Heart right ventricle (tissue), 16 donors: ENCODE measurements at regions of chr11 and their contacts with region 1.

Region 1: DNA sequence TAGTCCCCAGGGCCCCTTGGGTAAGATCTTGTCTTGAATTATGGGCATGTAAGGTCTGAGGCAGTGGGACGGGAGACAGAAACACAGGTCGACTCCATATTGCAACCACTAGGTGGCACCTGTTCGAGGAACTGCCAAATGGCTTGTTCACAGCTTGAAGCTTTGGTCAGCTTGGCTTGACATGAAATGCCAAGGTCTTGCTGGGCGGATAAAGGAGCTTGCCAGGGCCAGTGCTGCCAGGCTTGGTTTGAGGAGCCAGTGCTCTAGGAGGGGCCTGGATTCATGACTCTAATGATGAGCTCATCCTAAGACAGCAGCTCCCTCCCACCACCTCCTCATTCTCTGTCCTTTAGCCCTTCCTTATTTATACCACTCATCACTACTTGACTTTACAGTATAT is 11.9 kb upstream of the NRIP3 start:
- DNase-seq: peak in 1 of 2 donors; percentile 66
- ATAC-seq: peak; percentile 64 to 84 (median 75)
- H3K4me3 ChIP-seq: no peak overlapping the region
- H3K27ac ChIP-seq: no peak overlapping the region
- H3K4me1 ChIP-seq: peaks cover 0 to 32% (median 21%) of the 10 kb centered on the region in 9 donors
- H3K27me3 ChIP-seq: no peaks in the 10 kb centered on the region
- CTCF ChIP-seq: peak; percentile 45 to 83 (median 79)

Region 2: DNA sequence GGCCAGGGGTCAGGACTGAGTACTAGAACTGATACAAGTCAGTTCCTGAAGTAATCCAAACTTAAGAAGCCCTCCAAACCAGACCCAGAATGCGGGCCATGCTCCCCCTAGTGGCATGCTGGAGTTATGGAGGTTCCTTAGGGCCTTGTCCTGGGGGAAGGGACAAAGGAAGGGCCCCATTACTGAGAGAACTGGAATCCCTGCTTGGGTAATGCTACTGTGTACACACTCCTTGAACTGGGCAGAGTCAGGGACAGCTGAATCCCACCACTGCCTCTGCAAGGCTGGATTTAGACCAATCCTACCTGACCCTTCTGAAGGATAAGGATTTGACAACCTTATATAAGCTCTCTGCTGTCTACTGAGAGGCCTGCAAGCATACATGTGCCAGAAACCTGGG is 202.0 kb before region 1 on chr11:
- intact Hi-C with region 1: no loop called
- DNase-seq: peak; percentile 75 to 81
- ATAC-seq: peak; percentile 35 to 61 (median 48)
- H3K4me3 ChIP-seq: no peak overlapping the region
- H3K27ac ChIP-seq: peak overlapping the region in 8 of 10 donors; percentile 31 to 63 (median 43)
- H3K4me1 ChIP-seq: peaks cover 6 to 65% (median 31%) of the 10 kb centered on the region in 9 donors
- H3K27me3 ChIP-seq: no peaks in the 10 kb centered on the region
- CTCF ChIP-seq: peak; percentile 63 to 94 (median 88)

Region 3: DNA sequence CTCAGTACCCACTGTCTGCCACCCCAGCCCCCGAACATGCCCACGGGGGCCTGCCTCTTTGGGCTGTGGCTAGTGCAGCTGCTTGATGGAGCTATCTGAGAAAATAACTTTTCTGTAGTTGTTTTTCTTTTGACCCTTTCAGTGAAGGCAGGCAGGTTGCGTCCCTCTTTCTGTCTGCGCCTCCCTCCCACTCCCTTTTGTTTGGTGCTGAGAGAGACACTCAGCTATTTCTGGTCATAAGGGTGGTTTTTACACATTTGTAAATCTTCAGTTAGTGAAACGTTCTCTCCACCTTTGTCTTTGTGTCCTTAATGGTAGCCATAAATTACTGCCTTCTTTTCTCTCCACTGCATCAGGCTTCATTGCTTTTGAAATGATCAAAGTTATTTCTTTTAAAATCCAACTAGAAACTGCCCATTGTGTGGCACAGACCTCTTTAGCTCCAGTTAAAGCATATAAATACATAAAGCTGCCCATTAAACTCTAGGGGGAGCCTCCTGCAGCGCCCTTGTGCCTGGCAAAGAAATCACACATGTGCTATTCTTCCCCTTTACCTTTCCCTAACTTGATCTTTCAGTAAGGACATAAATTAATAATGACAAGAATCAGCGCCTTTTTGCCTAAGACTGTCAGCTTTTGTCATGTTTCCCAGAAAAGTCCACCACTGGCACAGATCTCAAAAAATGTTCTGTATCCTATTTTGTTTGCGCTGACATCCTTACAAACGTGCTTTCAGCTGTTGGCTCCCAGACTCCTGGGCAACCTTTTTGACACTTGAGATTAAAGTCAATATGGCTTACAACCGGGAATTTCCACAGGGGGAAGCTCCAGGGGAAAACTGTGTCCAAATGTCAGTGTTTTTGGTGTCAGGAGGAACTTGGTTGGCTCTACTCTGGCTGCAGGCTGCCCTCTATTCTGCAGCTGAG is 77.4 kb after region 1 on chr11:
- intact Hi-C with region 1: loop called in 1 of 10 experiments (anchors 5 kb)
- DNase-seq: no peak
- ATAC-seq: no peak
- H3K4me3 ChIP-seq: no peak overlapping the region
- H3K27ac ChIP-seq: no peak overlapping the region
- H3K4me1 ChIP-seq: peaks cover 0 to 6% (median 3%) of the 10 kb centered on the region in 9 donors
- H3K27me3 ChIP-seq: peaks cover 0 to 47% (median 15%) of the 10 kb centered on the region in 7 donors
- CTCF ChIP-seq: peak in 1 of 9 donors; percentile 12

Region 4: DNA sequence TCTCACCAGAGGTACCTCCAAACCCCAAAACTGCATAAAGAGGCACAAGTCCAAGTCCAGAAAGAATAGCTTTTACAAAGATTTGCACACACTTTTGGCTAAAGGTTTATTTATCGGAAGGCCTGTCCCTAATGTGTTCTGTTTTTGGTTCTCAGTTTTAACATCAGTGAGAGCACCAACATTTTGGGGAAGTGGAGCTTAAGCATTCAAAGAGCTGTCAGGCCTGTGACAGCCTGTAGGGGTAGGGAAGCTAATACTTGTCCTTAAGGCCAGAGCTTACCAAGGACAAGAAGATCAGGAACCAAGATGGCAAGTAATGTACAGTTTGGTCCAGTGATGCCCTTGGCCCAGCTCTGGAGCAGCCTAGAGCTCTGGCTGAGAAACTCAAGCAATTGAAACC is 114.6 kb after region 1 on chr11:
- intact Hi-C with region 1: loop called in 6 of 10 experiments (anchors 5 kb)
- DNase-seq: no peak
- ATAC-seq: no peak
- H3K4me3 ChIP-seq: no peak overlapping the region
- H3K27ac ChIP-seq: no peak overlapping the region
- H3K4me1 ChIP-seq: peaks cover 0 to 16% (median 0%) of the 10 kb centered on the region in 9 donors
- H3K27me3 ChIP-seq: no peaks in the 10 kb centered on the region
- CTCF ChIP-seq: no peak

Region 5: DNA sequence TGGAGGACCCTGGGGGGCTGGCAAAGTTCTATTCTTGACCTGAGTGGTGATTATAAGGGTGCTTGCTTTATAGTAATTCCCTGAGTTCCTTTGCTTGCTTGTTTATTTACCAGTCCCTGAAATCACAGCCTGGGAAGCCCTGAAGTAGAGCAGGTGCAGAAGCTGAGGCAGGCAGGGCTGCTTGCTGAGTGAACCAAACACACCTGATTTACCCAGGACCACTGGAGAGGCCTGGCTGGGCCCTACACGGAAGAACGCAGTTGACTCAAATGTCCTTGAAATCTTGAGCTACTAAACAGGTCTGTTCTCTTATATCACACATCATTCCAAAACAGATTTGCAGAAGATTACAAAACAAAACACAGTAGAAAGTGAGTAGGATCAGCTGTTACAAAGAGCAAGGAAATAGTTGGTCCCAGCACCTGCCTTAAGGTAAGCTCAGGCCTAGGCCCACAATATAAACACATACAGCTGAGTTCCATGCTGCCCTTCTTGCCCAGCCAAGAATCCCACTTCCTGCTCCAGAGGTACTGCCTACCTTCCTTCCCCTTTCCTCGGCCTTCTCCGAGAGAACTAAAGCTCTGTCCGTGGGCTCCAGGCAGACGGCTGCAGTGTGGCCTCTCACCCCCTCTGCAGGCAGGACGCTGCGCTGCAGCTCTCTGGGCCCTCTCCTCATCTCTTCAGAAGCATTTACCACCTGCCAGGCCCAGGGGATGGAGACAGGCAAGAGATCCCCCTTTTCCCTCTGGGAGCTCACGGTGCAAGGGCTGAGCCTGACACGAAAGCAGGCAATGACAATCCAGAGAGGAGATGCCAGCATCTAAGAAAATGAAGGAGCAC is 121.8 kb after region 1 on chr11:
- intact Hi-C with region 1: loop called (anchors 1 to 5 kb)
- DNase-seq: peak; percentile 70 to 71
- ATAC-seq: peak; percentile 82 to 94 (median 90)
- H3K4me3 ChIP-seq: no peak overlapping the region
- H3K27ac ChIP-seq: peak overlapping the region in 3 of 10 donors; percentile 13 to 28 (median 17)
- H3K4me1 ChIP-seq: peaks cover 0 to 35% (median 17%) of the 10 kb centered on the region in 9 donors
- H3K27me3 ChIP-seq: no peaks in the 10 kb centered on the region
- CTCF ChIP-seq: peak; percentile 85 to 97 (median 94)

Region 6: DNA sequence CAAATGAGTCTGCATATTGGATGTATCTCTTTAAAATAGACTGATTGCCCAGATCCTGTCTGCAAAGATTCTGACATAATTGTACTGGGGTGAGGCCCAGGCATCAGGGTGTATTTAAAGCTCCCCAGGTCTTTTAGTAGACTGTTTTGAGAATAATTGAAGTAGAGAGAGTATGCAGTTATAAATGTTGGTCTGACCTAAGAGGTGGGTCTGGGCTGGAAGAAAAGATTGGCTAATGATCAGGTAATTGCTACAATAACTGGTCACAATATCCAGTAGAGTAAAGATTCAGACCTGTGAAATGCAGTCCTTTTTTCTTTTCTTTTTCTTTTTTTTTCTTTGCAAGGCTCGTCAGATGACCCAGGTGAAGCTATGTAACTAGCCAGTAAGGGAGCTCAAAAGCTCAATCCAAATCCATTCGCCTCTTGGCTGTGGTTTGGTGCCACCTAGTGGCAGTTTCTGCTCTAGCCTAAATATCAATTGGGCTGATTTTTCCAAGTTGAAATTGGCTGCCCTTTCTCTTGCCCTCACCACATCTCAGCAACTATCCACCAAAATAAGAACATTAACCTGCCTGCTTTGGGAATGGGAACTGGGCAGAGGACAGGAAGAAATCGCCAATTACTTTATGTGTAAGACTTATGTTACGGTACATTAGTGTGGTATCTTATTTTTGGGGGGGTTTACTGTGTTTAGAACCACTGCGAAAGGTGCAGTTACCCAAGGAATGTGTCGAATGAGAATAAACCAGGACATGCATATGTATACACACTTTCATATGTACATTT is 491.0 kb after region 1 on chr11:
- intact Hi-C with region 1: loop called in 7 of 10 experiments (anchors 1 to 10 kb)
- DNase-seq: peak; percentile 37 to 60
- ATAC-seq: peak; percentile 65 to 86 (median 76)
- H3K4me3 ChIP-seq: no peak overlapping the region
- H3K27ac ChIP-seq: no peak overlapping the region
- H3K4me1 ChIP-seq: peaks cover 0 to 9% (median 0%) of the 10 kb centered on the region in 9 donors
- H3K27me3 ChIP-seq: no peaks in the 10 kb centered on the region
- CTCF ChIP-seq: peak; percentile 75 to 94 (median 91)